Caco-2 (cell line): ENCODE measurements at regions of chr6 and their contacts with region 1.

Region 1: DNA sequence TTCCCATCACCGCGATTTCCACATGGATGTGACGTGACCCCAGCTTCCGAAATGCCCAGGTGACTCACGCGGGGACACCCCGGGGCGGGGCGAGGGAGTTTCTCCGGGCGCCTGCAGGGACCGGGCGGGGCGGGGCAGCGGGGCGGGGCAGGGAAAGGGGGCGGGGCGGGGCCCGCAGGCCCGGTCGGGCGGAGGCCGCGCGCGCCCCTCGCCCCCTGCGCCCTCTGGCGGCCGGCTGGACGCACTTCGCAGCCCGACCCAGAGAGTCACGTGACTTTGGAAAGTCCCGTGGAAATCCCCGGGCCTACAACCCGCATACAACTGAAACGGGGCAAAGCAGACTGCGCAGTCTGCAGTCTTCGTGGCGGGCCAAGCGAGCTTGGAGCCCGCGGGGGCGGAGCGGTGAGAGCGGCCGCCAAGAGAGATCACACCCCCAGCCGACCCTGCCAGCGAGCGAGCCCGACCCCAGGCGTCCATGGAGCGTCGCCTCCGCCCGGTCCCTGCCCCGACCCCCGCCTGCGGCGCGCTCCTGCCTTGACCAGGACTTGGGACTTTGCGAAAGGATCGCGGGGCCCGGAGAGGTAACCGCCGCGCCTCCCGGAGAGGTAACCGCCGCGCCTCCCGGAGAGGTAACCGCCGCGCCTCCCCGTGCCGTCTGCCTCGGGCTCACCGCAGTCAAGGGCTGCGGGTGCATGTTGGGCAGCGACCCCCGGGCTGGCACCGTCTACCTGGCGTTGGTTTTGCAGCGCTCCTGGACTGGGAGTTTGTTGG is at the start of gene TNFAIP3:
- DNase-seq: peak; percentile 91 to 93
- H3K4me3 ChIP-seq: peak within 1 kb of the TSS; percentile 76
- H3K4me3 Mint-ChIP-seq: peak within 1 kb of the TSS; percentile 94
- H3K27ac Mint-ChIP-seq: peak within 1 kb of the TSS; percentile 97
- H3K4me1 ChIP-seq: peaks cover 36% of the 10 kb centered on the region
- H3K4me1 Mint-ChIP-seq: peaks cover 17% of the 10 kb centered on the region
- H3K27me3 ChIP-seq: no peaks in the 10 kb centered on the region
- H3K27me3 Mint-ChIP-seq: no peaks in the 10 kb centered on the region
- CTCF ChIP-seq: peak; percentile 69 to 78
- total RNA-seq, gene TNFAIP3: 45.7 and 50.4 TPM in 2 replicates

Region 2: GRCh38 chr6:137661601-137662000 is 205.5 kb before region 1 on chr6:
- CTCF ChIA-PET with region 1: no interaction called
- POLR2A ChIA-PET with region 1: no interaction called
- intact Hi-C with region 1: loop called (anchors 2 kb)
- DNase-seq: peak; percentile 42 to 44
- H3K4me3 ChIP-seq: no peak overlapping the region
- H3K4me3 Mint-ChIP-seq: no peak overlapping the region
- H3K27ac Mint-ChIP-seq: no peak overlapping the region
- H3K4me1 ChIP-seq: peaks cover 52% of the 10 kb centered on the region
- H3K4me1 Mint-ChIP-seq: peaks cover 17% of the 10 kb centered on the region
- H3K27me3 ChIP-seq: no peaks in the 10 kb centered on the region
- H3K27me3 Mint-ChIP-seq: no peaks in the 10 kb centered on the region
- CTCF ChIP-seq: peak; percentile 15 to 27

Region 3: GRCh38 chr6:137697267-137697938 is 169.7 kb before region 1 on chr6:
- CTCF ChIA-PET with region 1: no interaction called
- POLR2A ChIA-PET with region 1: no interaction called
- intact Hi-C with region 1: no loop called
- DNase-seq: peak; percentile 73 to 91
- H3K4me3 ChIP-seq: no peak overlapping the region
- H3K4me3 Mint-ChIP-seq: no peak overlapping the region
- H3K27ac Mint-ChIP-seq: peak overlapping the region; percentile 94
- H3K4me1 ChIP-seq: peaks cover 44% of the 10 kb centered on the region
- H3K4me1 Mint-ChIP-seq: peaks cover 27% of the 10 kb centered on the region
- H3K27me3 ChIP-seq: no peaks in the 10 kb centered on the region
- H3K27me3 Mint-ChIP-seq: no peaks in the 10 kb centered on the region
- CTCF ChIP-seq: peak; percentile 34 to 35

Region 4: GRCh38 chr6:137722749-137723272 is 144.3 kb before region 1 on chr6:
- CTCF ChIA-PET with region 1: interaction called, 4 read pairs
- POLR2A ChIA-PET with region 1: interaction called, 4 read pairs
- intact Hi-C with region 1: loop called (anchors 5 kb)
- DNase-seq: no peak
- H3K4me3 ChIP-seq: no peak overlapping the region
- H3K4me3 Mint-ChIP-seq: peak overlapping the region; percentile 36
- H3K27ac Mint-ChIP-seq: peak overlapping the region; percentile 86
- H3K4me1 ChIP-seq: peaks cover 41% of the 10 kb centered on the region
- H3K4me1 Mint-ChIP-seq: peaks cover 32% of the 10 kb centered on the region
- H3K27me3 ChIP-seq: no peaks in the 10 kb centered on the region
- H3K27me3 Mint-ChIP-seq: no peaks in the 10 kb centered on the region
- CTCF ChIP-seq: no peak

Region 5: GRCh38 chr6:137799950-137800568 is 67.0 kb before region 1 on chr6:
- CTCF ChIA-PET with region 1: interaction called, 6 read pairs
- POLR2A ChIA-PET with region 1: interaction called, 3 read pairs
- intact Hi-C with region 1: loop called (anchors 1 kb)
- DNase-seq: peak; percentile 47 to 52
- H3K4me3 ChIP-seq: no peak overlapping the region
- H3K4me3 Mint-ChIP-seq: no peak overlapping the region
- H3K27ac Mint-ChIP-seq: peak overlapping the region; percentile 72
- H3K4me1 ChIP-seq: peaks cover 98% of the 10 kb centered on the region
- H3K4me1 Mint-ChIP-seq: peaks cover 43% of the 10 kb centered on the region
- H3K27me3 ChIP-seq: no peaks in the 10 kb centered on the region
- H3K27me3 Mint-ChIP-seq: no peaks in the 10 kb centered on the region
- CTCF ChIP-seq: peak; percentile 27 to 33

Region 6: DNA sequence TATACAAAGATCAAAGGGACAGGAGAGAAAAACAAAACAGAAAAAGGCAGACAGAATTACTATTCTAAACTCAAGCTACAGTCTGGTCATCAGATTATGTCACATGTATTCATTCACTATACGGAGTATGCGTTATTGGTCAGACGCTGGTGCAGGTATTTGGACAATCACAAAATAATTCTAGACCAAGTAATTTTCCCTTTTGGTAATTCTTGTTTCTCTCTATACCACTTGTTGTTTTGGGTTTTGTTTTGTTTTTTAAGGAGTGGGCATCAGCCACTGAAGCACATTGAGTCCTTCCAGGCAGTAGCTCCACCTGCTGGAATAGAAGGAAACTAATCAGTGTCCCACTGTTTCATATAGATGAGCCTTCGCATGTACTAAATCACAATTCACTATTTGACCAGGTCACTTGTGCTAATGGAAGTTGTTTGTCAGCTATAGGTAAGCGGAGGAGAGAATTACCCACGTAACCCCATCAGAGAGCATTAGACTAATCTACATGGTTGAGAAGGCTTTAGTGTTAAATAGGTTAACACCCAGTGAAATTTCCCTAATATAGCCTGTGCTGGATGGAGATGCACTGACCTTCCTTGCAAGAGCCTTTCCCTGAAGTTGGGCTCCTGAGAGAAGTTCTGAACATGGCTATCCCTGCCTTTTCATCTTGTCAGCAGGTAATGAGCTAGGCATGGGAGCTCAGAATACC is 77.8 kb after region 1 on chr6:
- CTCF ChIA-PET with region 1: interaction called, 7 read pairs
- POLR2A ChIA-PET with region 1: no interaction called
- intact Hi-C with region 1: loop called (anchors 1 kb)
- DNase-seq: peak in 1 of 2 experiments; percentile 29
- H3K4me3 ChIP-seq: no peak overlapping the region
- H3K4me3 Mint-ChIP-seq: no peak overlapping the region
- H3K27ac Mint-ChIP-seq: no peak overlapping the region
- H3K4me1 ChIP-seq: 0 out of 2 replicates have a peak, but pooled peaks cover 3% of the 10 kb centered on the region
- H3K4me1 Mint-ChIP-seq: peaks cover 8% of the 10 kb centered on the region
- H3K27me3 ChIP-seq: no peaks in the 10 kb centered on the region
- H3K27me3 Mint-ChIP-seq: no peaks in the 10 kb centered on the region
- CTCF ChIP-seq: peak; percentile 62 to 63

Region 7: GRCh38 chr6:137995371-137995770 is 128.3 kb after region 1 on chr6:
- CTCF ChIA-PET with region 1: no interaction called
- POLR2A ChIA-PET with region 1: no interaction called
- intact Hi-C with region 1: no loop called
- DNase-seq: no peak
- H3K4me3 ChIP-seq: no peak overlapping the region
- H3K4me3 Mint-ChIP-seq: no peak overlapping the region
- H3K27ac Mint-ChIP-seq: no peak overlapping the region
- H3K4me1 ChIP-seq: no peaks in the 10 kb centered on the region
- H3K4me1 Mint-ChIP-seq: no peaks in the 10 kb centered on the region
- H3K27me3 ChIP-seq: no peaks in the 10 kb centered on the region
- H3K27me3 Mint-ChIP-seq: no peaks in the 10 kb centered on the region
- CTCF ChIP-seq: no peak